AG04449 (cell line): ENCODE measurements at regions of chr6 and their contacts with region 1.

Region 1: DNA sequence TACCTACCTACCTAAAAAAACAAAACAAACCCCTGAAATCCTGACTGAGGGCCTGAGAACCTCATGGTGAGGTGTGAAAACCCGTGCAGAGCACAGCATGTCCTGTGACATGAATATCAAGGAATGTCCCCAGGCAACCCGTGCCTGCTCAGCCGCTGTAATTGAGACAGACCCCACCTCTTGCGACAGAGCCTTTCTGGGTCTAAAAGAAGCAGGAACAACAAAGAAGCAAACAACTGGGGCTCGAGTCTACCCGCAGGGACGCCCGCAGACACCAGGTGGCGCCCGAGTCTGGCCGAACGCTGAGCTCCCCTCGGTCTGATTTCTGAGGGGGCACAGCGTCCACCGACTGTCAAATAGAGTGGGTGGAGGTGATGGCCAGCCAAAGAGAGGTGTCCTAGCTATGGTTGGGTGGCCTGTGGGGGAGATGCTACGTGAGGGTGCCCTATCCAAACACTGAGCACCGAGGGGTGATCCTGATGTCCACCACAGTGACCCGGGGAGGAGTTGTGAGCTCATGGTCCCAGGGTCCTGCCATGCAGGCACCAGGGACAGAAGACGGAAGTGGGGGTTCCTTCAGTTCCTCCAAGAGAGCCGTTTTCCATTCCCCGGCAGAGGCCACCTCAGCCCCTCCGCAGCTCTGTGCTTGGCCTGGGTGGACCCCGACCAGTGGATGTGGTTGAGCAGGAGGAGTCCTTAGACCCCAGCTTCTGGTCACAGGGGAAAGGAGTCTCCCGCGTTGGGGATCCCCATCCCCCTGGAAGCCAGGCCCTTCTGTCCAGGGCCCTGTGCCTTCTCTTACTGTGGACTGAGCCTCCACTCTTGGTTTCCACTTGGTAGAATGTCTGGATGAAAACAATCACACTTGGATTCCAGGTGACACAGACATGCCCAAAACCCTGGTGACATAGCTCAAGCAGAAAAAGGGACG is 268.2 kb downstream of the CDC5L start:
- DNase-seq: no peak
- H3K4me3 ChIP-seq: no peak overlapping the region
- CTCF ChIP-seq: peak; percentile 92

Region 2: GRCh38 chr6:44563397-44563796 is 92.3 kb before region 1 on chr6:
- CTCF ChIA-PET with region 1: no interaction called
- POLR2A ChIA-PET with region 1: no interaction called
- DNase-seq: no peak
- H3K4me3 ChIP-seq: no peak overlapping the region
- CTCF ChIP-seq: no peak

Region 3: GRCh38 chr6:44667668-44668390 is 12.2 kb after region 1 on chr6:
- CTCF ChIA-PET with region 1: interaction called, 81 read pairs
- POLR2A ChIA-PET with region 1: interaction called, 6 read pairs
- DNase-seq: no peak
- H3K4me3 ChIP-seq: no peak overlapping the region
- CTCF ChIP-seq: peak; percentile 60

Region 4: GRCh38 chr6:44854712-44855443 is 199.2 kb after region 1 on chr6:
- CTCF ChIA-PET with region 1: interaction called, 10 read pairs
- POLR2A ChIA-PET with region 1: no interaction called
- DNase-seq: no peak
- H3K4me3 ChIP-seq: no peak overlapping the region
- CTCF ChIP-seq: no peak

Region 5: DNA sequence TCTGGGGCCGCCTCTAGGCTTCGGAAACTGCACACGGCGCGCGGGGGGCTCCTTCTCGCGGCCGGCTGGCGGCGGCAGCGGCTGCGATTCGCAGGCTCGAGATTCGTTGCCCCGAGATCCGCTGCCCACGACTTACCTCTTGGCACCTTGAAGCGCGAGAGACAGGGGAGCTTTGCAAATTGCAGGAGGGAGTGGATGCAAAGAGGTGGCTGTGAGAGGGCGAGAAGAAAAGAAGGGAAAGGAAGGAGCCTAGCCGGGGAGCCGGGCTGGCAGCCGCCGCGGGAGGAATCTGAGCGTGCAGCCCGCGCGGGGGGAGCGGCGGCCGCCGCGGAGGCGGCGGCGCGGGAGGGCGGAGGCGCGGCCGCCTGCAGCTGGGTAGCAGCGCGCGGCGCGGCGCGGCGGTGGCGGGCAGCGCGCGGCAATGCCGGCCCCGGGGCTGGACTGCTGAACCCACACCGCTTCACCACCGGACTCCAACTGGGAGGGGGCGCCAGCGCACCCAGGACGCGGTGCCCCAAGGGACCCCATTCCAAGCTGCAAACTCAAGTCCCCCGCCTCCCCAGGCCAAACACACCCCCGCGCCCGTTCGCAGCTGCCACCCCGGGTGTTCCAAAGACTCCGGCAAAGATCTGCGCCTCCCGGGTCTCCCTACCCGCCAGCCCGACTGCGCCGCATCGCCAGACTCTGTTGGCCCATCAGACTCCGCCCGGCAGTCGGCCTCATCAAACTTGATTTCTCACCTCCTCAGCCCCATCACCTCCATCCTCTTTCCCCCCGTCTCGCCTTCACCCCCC is 766.2 kb after region 1 on chr6:
- CTCF ChIA-PET with region 1: interaction called, 27 read pairs
- POLR2A ChIA-PET with region 1: no interaction called
- DNase-seq: no peak
- H3K4me3 ChIP-seq: peak overlapping the region; percentile 96
- CTCF ChIP-seq: peak; percentile 55